Heart left ventricle (tissue), 16 donors: ENCODE measurements at regions of chr7 and their contacts with region 1.

Region 1: DNA sequence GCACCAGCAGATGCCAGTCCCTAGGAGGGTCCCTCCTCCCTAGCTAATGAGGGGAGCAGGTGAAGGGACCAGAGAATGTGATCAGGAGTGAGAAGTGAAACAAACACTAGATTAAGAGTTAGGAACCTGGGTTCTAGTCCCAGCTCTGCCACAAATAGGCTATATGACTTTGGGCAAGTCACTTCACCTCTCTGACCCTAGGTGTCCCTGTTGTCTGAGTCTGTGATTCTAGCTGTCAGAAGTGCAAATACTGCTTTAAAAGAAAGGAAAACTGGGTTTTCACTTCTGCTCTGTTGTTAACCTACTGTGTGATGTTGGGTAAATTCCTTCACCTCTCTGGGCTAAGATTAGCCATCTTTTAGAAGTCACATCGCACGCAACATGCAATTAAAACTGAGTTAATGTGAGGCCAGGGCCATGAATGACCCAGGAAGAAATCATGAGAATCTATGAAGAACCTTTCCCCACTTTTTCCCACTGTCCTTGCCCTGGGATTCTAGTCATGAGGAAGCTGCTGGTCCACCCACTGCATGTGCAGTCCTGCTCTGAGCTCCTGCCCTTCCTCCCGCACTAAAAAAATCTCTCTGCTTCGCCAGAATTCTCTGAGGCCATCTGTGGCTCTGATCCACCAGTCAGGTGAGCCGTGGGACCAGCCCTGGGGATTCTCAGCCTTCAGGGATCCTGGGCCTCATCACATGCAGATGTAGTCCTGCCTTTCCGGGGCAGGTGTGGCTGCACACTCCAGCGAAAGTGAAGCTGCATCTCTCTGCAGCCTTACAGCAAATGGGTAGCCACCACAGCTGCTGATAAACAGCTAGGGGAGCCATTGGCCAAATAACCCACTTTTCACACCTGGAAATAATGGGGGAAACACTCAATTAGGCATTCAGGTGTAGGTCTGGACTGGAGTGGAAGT is 181.7 kb downstream of the PLXNA4 start:
- DNase-seq: no peak
- ATAC-seq: peak; percentile 3 to 46 (median 30)
- H3K4me3 ChIP-seq: no peak overlapping the region
- H3K27ac ChIP-seq: peak overlapping the region in 4 of 12 donors; percentile 3 to 58 (median 44)
- H3K4me1 ChIP-seq: peaks cover 0 to 56% (median 20%) of the 10 kb centered on the region in 12 donors
- H3K27me3 ChIP-seq: no peaks in the 10 kb centered on the region
- CTCF ChIP-seq: peak in 10 of 12 donors; percentile 3 to 49 (median 36)
- POLR2A ChIP-seq: no peak

Region 2: DNA sequence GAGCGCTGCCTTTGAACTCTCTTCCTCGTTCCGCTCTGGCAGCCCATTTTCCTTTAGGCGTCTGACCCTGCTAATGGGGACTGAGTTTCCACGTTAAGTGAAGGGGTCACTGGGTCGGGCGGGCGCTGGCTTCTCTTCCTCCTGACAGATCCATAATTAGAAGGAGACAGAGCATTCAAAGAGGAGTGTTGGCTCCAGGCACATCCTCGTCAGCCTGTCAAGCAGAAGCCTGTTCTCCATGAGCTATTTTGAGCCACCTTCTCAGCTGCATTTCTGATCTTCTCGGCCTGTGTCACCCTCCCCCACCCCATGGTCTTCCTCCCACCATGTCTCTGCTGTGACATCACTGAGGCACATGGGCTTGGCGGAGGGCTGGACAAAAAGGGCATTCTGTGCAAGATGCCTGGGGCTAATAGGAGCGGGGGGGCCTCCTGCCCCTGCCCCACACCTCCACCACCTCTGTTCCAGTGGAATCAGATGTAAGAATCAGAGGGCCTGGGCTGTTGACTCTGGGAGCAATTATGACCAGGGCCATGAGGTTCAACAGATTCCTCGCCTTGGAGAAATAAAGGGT is 66.4 kb before region 1 on chr7:
- intact Hi-C with region 1: loop called in 5 of 10 experiments (anchors 5 to 10 kb)
- DNase-seq: peak in 4 of 5 donors; percentile 28 to 63 (median 45)
- ATAC-seq: peak; percentile 53 to 90 (median 84)
- H3K4me3 ChIP-seq: no peak overlapping the region
- H3K27ac ChIP-seq: peak overlapping the region in 8 of 12 donors; percentile 6 to 69 (median 52)
- H3K4me1 ChIP-seq: peaks cover 0 to 51% (median 8%) of the 10 kb centered on the region in 12 donors
- H3K27me3 ChIP-seq: no peaks in the 10 kb centered on the region
- CTCF ChIP-seq: no peak
- POLR2A ChIP-seq: no peak

Region 3: DNA sequence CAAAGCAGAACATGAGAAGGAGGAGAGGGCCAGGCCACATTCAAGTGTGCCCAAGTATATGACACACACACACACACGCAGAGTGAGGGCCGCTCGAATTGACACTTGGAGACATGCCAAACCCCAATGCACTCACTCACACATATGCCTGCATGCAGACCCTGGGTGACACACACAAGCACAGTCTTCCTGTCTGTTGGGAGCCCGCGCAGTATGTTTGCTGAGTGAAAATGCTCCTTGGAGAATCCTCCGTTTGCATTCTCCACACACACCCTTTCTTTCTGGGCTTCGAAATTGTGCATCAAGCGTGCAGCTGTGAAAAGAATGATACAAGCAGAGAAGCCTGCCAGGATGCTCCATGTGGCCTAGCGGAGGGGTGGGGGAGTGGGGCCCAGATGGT is 60.8 kb after region 1 on chr7:
- intact Hi-C with region 1: no loop called
- DNase-seq: no peak
- ATAC-seq: peak in 1 of 4 donors; percentile 13
- H3K4me3 ChIP-seq: no peak overlapping the region
- H3K27ac ChIP-seq: no peak overlapping the region
- H3K4me1 ChIP-seq: peaks cover 0 to 18% (median 2%) of the 10 kb centered on the region in 12 donors
- H3K27me3 ChIP-seq: no peaks in the 10 kb centered on the region
- CTCF ChIP-seq: no peak
- POLR2A ChIP-seq: no peak

Region 4: GRCh38 chr7:132500727-132501440 is 106.3 kb after region 1 on chr7:
- intact Hi-C with region 1: loop called in 3 of 10 experiments (anchors 10 kb)
- DNase-seq: peak in 4 of 5 donors; percentile 64 to 82 (median 73)
- ATAC-seq: peak; percentile 81 to 92 (median 85)
- H3K4me3 ChIP-seq: no peak overlapping the region
- H3K27ac ChIP-seq: peak overlapping the region in 3 of 12 donors; percentile 0 to 37 (median 34)
- H3K4me1 ChIP-seq: peaks cover 0 to 29% (median 6%) of the 10 kb centered on the region in 12 donors
- H3K27me3 ChIP-seq: no peaks in the 10 kb centered on the region
- CTCF ChIP-seq: peak; percentile 15 to 63 (median 50)
- POLR2A ChIP-seq: no peak

Region 5: GRCh38 chr7:132575419-132575981 is 181.0 kb after region 1 on chr7:
- intact Hi-C with region 1: loop called in 6 of 10 experiments (anchors 2 to 10 kb)
- DNase-seq: peak; percentile 58 to 76 (median 63)
- ATAC-seq: peak; percentile 62 to 78 (median 74)
- H3K4me3 ChIP-seq: peak overlapping the region; percentile 38 to 77 (median 61)
- H3K27ac ChIP-seq: peak overlapping the region in 9 of 12 donors; percentile 67 to 84 (median 75)
- H3K4me1 ChIP-seq: peaks cover 0 to 43% (median 9%) of the 10 kb centered on the region in 12 donors
- H3K27me3 ChIP-seq: peaks cover 0 to 65% (median 5%) of the 10 kb centered on the region in 9 donors
- CTCF ChIP-seq: peak in 6 of 12 donors; percentile 23 to 40 (median 25)
- POLR2A ChIP-seq: no peak